Transverse colon (tissue), 4 donors: ENCODE measurements at regions of chr2 and their contacts with region 1.

Region 1: GRCh38 chr2:208175069-208175839 is 11.9 kb upstream of the CRYGA start:
- DNase-seq: peak; percentile 79
- H3K4me3 ChIP-seq: no peak overlapping the region
- H3K27ac ChIP-seq: no peak overlapping the region
- H3K4me1 ChIP-seq: no peaks in the 10 kb centered on the region
- H3K27me3 ChIP-seq: no peaks in the 10 kb centered on the region
- CTCF ChIP-seq: peak; percentile 73 to 90 (median 80)
- EP300 ChIP-seq: no peak
- POLR2A ChIP-seq: no peak

Region 2: GRCh38 chr2:207896525-207897295 is 278.5 kb before region 1 on chr2:
- in situ Hi-C with region 1: no loop called
- intact Hi-C with region 1: no loop called
- DNase-seq: peak; percentile 30
- H3K4me3 ChIP-seq: no peak overlapping the region
- H3K27ac ChIP-seq: peak overlapping the region; percentile 60 to 84 (median 80)
- H3K4me1 ChIP-seq: peaks cover 16 to 50% (median 28%) of the 10 kb centered on the region in 4 donors
- H3K27me3 ChIP-seq: no peaks in the 10 kb centered on the region
- CTCF ChIP-seq: peak in 3 of 5 experiments; percentile 21 to 42 (median 33)
- EP300 ChIP-seq: peak; percentile 60
- POLR2A ChIP-seq: no peak

Region 3: DNA sequence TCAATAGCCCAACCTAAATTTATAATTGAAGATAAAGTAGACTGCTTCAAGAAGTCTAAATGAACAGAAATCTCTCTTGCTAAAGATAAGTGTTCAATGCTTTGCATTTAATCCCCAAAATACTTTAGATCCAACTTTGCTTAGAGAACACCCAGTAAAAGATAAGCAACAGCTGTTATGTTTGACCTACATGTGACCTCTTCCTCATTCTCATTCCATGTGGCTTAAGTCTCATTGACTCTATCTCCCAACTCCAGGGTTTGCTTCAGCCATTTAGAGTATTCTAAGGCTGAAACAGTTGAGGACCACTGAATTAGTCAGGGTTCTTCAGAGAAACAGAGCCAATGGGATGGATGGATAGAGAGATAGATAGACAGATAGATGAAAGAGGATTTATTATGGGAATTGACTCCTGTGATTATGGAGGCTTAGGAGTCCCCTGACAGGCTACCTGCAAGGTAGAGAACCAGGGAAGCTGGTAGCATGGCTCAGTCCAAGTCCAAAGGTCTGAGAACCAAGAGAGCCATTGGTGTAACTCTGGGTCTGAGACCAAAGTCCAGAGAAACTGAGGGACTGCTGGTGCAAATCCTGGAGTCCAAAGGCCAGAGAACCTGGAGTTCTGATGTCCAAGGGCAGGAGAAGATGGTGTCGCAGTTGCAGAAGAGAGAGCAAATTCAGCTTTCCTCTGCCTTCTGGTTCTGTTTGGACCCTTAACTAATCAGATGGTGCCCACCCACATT is 83.0 kb before region 1 on chr2:
- in situ Hi-C with region 1: no loop called
- intact Hi-C with region 1: no loop called
- DNase-seq: no peak
- H3K4me3 ChIP-seq: no peak overlapping the region
- H3K27ac ChIP-seq: no peak overlapping the region
- H3K4me1 ChIP-seq: no peaks in the 10 kb centered on the region
- H3K27me3 ChIP-seq: no peaks in the 10 kb centered on the region
- CTCF ChIP-seq: no peak
- EP300 ChIP-seq: no peak
- POLR2A ChIP-seq: no peak

Region 4: GRCh38 chr2:208249241-208249640 is 74.0 kb after region 1 on chr2:
- in situ Hi-C with region 1: loop called in 1 of 4 experiments (anchors 10 kb)
- intact Hi-C with region 1: no loop called
- DNase-seq: no peak
- H3K4me3 ChIP-seq: no peak overlapping the region
- H3K27ac ChIP-seq: no peak overlapping the region
- H3K4me1 ChIP-seq: peaks cover 0 to 31% (median 14%) of the 10 kb centered on the region in 4 donors
- H3K27me3 ChIP-seq: no peaks in the 10 kb centered on the region
- CTCF ChIP-seq: no peak
- EP300 ChIP-seq: no peak
- POLR2A ChIP-seq: no peak